Activated CD8-positive, alpha-beta T cell treated with anti-CD3 and anti-CD28 coated beads, Interleukin-2, amount 10 ng/mL, durations not matched to agents 7 days and 5 days (primary cell): ENCODE measurements at regions of chr6 and their contacts with region 1.

Region 1: GRCh38 chr6:28355743-28356665 is 6.3 kb downstream of the ZKSCAN3 start:
- DNase-seq: peak; percentile 81
- ATAC-seq: peak; percentile 83
- H3K4me3 Mint-ChIP-seq: peak overlapping the region; percentile 90
- H3K27ac Mint-ChIP-seq: peak overlapping the region; percentile 87
- H3K4me1 Mint-ChIP-seq: peaks cover 34% of the 10 kb centered on the region
- H3K27me3 Mint-ChIP-seq: no peaks in the 10 kb centered on the region

Region 2: GRCh38 chr6:28136585-28137504 is 219.2 kb before region 1 on chr6:
- CTCF ChIA-PET with region 1: interaction called, 44 read pairs
- POLR2A ChIA-PET with region 1: interaction called, 5 read pairs
- DNase-seq: peak; percentile 83
- ATAC-seq: peak; percentile 67
- H3K4me3 Mint-ChIP-seq: peak overlapping the region; percentile 84
- H3K27ac Mint-ChIP-seq: peak overlapping the region; percentile 90
- H3K4me1 Mint-ChIP-seq: peaks cover 61% of the 10 kb centered on the region
- H3K27me3 Mint-ChIP-seq: no peaks in the 10 kb centered on the region

Region 3: DNA sequence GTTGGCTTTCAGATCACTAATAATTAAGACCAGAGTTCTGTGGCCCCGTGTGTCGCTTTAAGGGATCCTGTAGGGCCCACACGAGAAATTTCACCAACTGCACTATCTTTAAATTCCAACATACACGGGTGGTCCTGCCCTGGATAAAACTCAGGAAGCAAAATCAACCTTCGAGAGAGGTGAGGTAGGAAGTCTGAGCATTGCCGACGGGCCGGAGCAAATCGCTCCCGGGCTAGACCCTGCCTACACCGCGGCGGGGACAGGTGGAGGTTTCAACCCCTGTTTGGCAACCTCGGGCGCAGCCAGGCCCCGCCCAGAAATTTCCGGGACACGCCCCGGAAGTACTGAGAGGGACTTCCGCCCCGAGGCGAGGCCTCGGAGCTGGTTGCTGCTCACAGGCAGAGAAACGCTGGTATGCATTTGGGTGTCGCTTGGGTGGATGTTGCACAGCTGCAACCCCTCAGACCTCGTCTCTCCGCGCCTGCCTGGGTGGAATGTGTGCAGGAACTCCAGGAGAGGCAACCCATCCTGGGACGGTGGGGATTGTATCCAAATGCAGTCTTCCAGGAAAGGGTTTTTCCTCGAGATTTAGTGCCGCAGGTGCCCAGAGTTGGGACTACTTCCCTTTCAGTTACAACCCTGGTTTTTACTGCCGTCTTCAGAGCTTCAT is 194.5 kb before region 1 on chr6:
- CTCF ChIA-PET with region 1: interaction called, 10 read pairs
- POLR2A ChIA-PET with region 1: no interaction called
- DNase-seq: peak; percentile 86
- ATAC-seq: peak; percentile 97
- H3K4me3 Mint-ChIP-seq: peak overlapping the region; percentile 69
- H3K27ac Mint-ChIP-seq: peak overlapping the region; percentile 21
- H3K4me1 Mint-ChIP-seq: peaks cover 16% of the 10 kb centered on the region
- H3K27me3 Mint-ChIP-seq: no peaks in the 10 kb centered on the region

Region 4: GRCh38 chr6:28266962-28267694 is 88.9 kb before region 1 on chr6 and contains the start of gene ZSCAN26:
- CTCF ChIA-PET with region 1: interaction called, 20 read pairs
- POLR2A ChIA-PET with region 1: interaction called, 8 read pairs
- DNase-seq: peak; percentile 92
- ATAC-seq: peak; percentile 98
- H3K4me3 Mint-ChIP-seq: no peak within 1 kb of the TSS
- H3K27ac Mint-ChIP-seq: no peak within 1 kb of the TSS
- H3K4me1 Mint-ChIP-seq: peaks cover 15% of the 10 kb centered on the region
- H3K27me3 Mint-ChIP-seq: peaks cover 8% of the 10 kb centered on the region
- total RNA-seq, gene ZSCAN26: 6.7 to 9.7 TPM

Region 5: GRCh38 chr6:28281288-28282064 is 74.5 kb before region 1 on chr6 and contains the start of gene PGBD1:
- CTCF ChIA-PET with region 1: interaction called, 17 read pairs
- POLR2A ChIA-PET with region 1: no interaction called
- DNase-seq: peak; percentile 70
- ATAC-seq: peak; percentile 98
- H3K4me3 Mint-ChIP-seq: peak within 1 kb of the TSS; percentile 86
- H3K27ac Mint-ChIP-seq: peak within 1 kb of the TSS; percentile 18
- H3K4me1 Mint-ChIP-seq: peaks cover 17% of the 10 kb centered on the region
- H3K27me3 Mint-ChIP-seq: peaks cover 6% of the 10 kb centered on the region
- total RNA-seq, gene PGBD1: 3.6 to 4.0 TPM

Region 6: DNA sequence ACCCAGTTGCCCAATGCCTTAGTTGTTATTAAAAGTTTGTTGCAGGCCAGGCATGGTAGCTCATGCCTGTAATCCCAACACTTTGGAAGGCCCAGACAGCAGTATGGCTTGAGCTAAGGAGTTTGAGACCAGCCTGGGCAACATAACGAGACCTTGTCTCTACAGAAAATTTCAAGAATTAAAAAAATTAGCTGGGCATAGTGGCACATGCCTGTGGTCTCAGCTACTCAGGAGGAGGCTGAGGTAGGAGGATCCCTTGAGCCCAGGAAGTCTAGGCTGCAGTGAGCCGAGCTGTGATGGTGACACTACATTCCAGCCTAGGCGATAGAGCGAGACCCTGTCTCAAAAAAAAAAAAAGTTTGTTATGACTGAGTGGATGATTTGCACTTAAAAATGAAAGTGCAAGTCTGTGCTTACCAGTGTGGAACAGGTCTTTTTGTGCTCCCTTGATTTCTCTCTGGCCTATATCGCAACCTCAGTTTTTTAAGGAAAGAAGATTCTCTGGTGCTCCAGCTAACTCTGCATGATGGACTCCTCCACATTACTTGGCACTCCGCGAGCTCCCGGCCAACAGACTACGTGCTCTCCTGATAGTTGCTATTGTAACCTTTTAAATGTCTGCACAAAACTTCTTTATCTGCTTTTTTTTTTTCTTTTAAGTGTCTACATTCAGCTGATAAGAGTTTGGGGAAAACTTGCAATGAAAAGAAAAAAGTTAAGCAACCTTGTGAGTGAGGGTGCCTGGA is 15.9 kb after region 1 on chr6:
- CTCF ChIA-PET with region 1: interaction called, 13 read pairs
- POLR2A ChIA-PET with region 1: no interaction called
- DNase-seq: no peak
- ATAC-seq: no peak
- H3K4me3 Mint-ChIP-seq: no peak overlapping the region
- H3K27ac Mint-ChIP-seq: peak overlapping the region; percentile 50
- H3K4me1 Mint-ChIP-seq: peaks cover 2% of the 10 kb centered on the region
- H3K27me3 Mint-ChIP-seq: no peaks in the 10 kb centered on the region

Region 7: GRCh38 chr6:28383235-28384142 is 27.5 kb after region 1 on chr6:
- CTCF ChIA-PET with region 1: interaction called, 32 read pairs
- POLR2A ChIA-PET with region 1: no interaction called
- DNase-seq: peak; percentile 24
- ATAC-seq: no peak
- H3K4me3 Mint-ChIP-seq: peak overlapping the region; percentile 16
- H3K27ac Mint-ChIP-seq: no peak overlapping the region
- H3K4me1 Mint-ChIP-seq: peaks cover 15% of the 10 kb centered on the region
- H3K27me3 Mint-ChIP-seq: no peaks in the 10 kb centered on the region

Region 8: DNA sequence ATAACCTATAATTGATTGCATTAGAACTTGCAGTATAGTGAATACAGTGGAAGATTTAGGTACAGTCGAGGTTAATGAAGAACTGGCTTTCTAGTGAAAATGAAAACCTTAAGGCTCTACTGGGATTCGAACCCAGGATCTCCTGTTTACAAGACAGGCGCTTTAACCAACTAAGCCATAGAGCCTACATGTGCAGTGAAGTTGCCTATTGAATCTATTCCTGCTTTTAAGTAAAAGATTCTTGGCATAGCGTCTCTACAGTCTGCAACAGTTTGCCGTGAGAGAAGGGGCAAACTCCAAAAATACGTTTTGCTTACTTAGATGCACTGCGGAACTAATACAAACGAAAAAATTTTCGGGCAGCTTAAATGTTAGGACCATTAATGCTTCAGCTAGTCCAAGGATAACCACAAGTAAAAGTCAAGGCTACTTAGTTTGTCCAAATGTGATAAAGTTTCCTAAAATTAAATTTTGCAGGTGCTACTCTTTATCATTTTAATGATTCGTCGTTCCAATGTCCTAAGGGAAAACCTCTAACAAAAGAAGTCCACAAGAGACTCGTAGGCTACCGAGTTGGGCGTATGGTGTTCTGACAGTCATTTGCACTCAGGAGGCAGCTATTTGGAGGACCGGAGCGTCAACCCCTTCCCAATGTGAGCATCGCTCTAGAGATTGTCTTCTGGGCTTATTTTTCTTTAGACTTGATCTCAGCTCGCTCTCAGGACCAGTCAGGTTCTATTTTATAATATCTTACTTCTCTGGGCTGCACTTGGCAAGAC is 118.6 kb after region 1 on chr6:
- CTCF ChIA-PET with region 1: no interaction called
- POLR2A ChIA-PET with region 1: no interaction called
- DNase-seq: peak; percentile 46
- ATAC-seq: peak; percentile 72
- H3K4me3 Mint-ChIP-seq: peak overlapping the region; percentile 63
- H3K27ac Mint-ChIP-seq: no peak overlapping the region
- H3K4me1 Mint-ChIP-seq: peaks cover 17% of the 10 kb centered on the region
- H3K27me3 Mint-ChIP-seq: peaks cover 57% of the 10 kb centered on the region